Activated B cell treated with CpG ODN at 0.5 μM for 24 hours (primary cell): ENCODE measurements at regions of chr2 and their contacts with region 1.

Region 1: DNA sequence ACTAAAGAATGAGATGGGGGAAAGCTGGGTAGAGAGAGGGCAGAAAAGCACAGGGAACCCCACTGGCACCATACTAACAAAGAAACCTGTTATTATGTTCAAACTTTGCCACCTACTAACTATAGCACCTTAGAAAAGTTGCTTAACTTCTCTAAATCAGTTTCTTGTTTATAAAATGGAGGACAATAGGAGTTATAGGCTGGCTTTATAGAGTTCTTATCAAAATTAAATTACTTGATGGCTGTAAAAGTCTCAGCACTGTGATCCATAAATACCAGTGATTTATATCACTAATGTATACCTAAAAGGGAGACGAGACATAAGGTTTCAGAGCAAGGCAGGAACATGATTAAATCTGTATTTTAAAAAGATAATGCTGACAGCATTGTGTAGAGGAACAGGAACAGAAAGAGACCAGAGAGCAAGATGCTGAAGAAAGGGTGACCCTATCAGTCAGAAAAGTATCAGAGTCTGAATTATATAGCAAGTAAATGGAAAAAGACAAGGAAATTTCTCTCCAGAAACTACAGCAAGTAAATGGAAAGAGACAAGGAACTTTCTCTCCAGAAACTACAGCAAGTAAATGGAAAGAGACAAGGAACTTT is 29.1 kb downstream of the PRKD3 start:
- DNase-seq: no peak
- ATAC-seq: peak; percentile 34
- H3K4me3 Mint-ChIP-seq: no peak overlapping the region
- H3K27ac Mint-ChIP-seq: peak overlapping the region; percentile 39
- H3K4me1 Mint-ChIP-seq: peaks cover 48% of the 10 kb centered on the region
- H3K27me3 Mint-ChIP-seq: no peaks in the 10 kb centered on the region
- CTCF ChIP-seq: no peak

Region 2: GRCh38 chr2:37306024-37306423 is 10.5 kb after region 1 on chr2:
- CTCF ChIA-PET with region 1: no interaction called
- POLR2A ChIA-PET with region 1: no interaction called
- intact Hi-C with region 1: loop called (anchors 1 kb)
- DNase-seq: no peak
- ATAC-seq: no peak
- H3K4me3 Mint-ChIP-seq: no peak overlapping the region
- H3K27ac Mint-ChIP-seq: no peak overlapping the region
- H3K4me1 Mint-ChIP-seq: peaks cover 58% of the 10 kb centered on the region
- H3K27me3 Mint-ChIP-seq: no peaks in the 10 kb centered on the region
- CTCF ChIP-seq: no peak

Region 3: DNA sequence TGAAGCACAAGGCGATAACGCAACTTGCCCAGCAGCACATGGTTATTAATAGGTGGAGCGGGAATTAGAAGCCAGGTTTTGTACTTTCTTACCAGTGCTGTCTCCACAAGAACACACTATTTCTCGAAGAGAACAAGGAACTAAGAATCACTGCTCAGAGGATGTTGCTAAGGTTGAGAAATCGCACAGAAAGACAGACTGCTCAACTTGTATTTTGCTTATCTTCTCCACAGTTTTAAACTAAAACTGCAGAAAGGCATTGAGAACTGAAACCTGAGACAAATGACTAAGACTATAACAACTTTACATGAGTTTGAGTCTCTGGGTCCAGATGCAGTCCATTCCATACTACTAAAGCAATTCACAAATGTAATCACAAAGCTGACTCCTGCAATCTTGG is 22.8 kb after region 1 on chr2:
- CTCF ChIA-PET with region 1: no interaction called
- POLR2A ChIA-PET with region 1: interaction called, 8 read pairs
- intact Hi-C with region 1: loop called (anchors 2 kb)
- DNase-seq: no peak
- ATAC-seq: peak; percentile 85
- H3K4me3 Mint-ChIP-seq: peak overlapping the region; percentile 61
- H3K27ac Mint-ChIP-seq: peak overlapping the region; percentile 85
- H3K4me1 Mint-ChIP-seq: peaks cover 85% of the 10 kb centered on the region
- H3K27me3 Mint-ChIP-seq: no peaks in the 10 kb centered on the region
- CTCF ChIP-seq: no peak